PC-3 (cell line): ENCODE measurements at regions of chrX and their contacts with region 1.

Region 1: GRCh38 chrX:7159132-7159861 is 11.3 kb upstream of the PUDP start:
- DNase-seq: peak; percentile 86
- ATAC-seq: peak; percentile 99
- H3K4me3 ChIP-seq: peak overlapping the region; percentile 25; the same call in 1 of the 2 replicates
- H3K27ac ChIP-seq: peak overlapping the region; percentile 86
- H3K4me1 ChIP-seq: peaks cover 23% of the 10 kb centered on the region
- H3K27me3 ChIP-seq: no peaks in the 10 kb centered on the region
- CTCF ChIP-seq: no peak

Region 2: DNA sequence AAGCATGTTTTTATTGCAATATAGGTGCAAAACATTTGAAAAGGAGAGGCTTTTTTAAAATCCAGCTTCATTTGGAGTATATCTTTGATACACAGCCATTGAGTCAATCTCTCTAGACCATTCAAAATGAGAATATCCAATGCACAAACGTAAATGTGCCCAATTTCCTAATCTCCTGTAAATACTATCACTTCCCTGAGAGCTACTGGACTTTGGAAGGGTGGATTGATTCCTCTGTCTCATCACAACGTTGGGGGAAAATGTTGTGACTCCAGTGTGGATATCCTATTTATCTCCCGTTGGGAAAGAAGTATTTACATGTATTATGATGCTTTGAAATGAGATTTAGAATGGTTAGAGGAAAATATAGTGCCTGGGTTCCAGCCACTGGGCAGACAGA is 560.1 kb before region 1 on chrX:
- CTCF ChIA-PET with region 1: no interaction called
- POLR2A ChIA-PET with region 1: no interaction called
- intact Hi-C with region 1: no loop called
- DNase-seq: no peak
- ATAC-seq: no peak
- H3K4me3 ChIP-seq: no peak overlapping the region
- H3K27ac ChIP-seq: no peak overlapping the region
- H3K4me1 ChIP-seq: no peaks in the 10 kb centered on the region
- H3K27me3 ChIP-seq: no peaks in the 10 kb centered on the region
- CTCF ChIP-seq: no peak

Region 3: GRCh38 chrX:7147978-7148824 is 11.1 kb before region 1 on chrX and contains the start of gene PUDP:
- CTCF ChIA-PET with region 1: no interaction called
- POLR2A ChIA-PET with region 1: no interaction called
- intact Hi-C with region 1: loop called (anchors 2 kb)
- DNase-seq: peak; percentile 84
- ATAC-seq: peak; percentile 78
- H3K4me3 ChIP-seq: peak within 1 kb of the TSS; percentile 96
- H3K27ac ChIP-seq: peak within 1 kb of the TSS; percentile 68
- H3K4me1 ChIP-seq: peaks cover 30% of the 10 kb centered on the region
- H3K27me3 ChIP-seq: no peaks in the 10 kb centered on the region
- CTCF ChIP-seq: peak; percentile 26; the same call in 1 of the 2 replicates
- total RNA-seq, gene PUDP: 7.6 and 7.8 TPM in 2 replicates

Region 4: DNA sequence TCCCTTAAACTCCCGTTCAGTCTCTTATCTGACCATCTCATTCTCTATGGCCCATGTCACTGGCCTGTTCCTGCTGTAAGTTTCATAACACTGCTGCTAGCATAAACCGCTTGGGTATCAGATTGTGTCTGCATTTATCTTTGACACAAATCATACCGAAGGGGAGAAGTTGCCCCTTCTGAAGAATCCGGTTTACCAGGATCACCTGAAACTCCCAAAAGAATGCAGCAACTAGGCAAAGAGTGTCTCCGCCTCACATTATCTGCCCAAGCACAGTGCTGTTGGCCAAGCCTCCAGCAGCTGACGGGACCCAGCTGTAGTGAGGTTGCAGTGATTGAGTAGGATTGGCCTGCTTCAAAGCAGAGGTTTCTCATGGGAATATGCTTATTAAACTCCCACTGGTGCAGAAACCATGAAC is 59.9 kb after region 1 on chrX:
- CTCF ChIA-PET with region 1: no interaction called
- POLR2A ChIA-PET with region 1: no interaction called
- intact Hi-C with region 1: no loop called
- DNase-seq: no peak
- ATAC-seq: no peak
- H3K4me3 ChIP-seq: no peak overlapping the region
- H3K27ac ChIP-seq: no peak overlapping the region
- H3K4me1 ChIP-seq: peaks cover under 1% of the 10 kb centered on the region; the same call in 1 of the 2 replicates
- H3K27me3 ChIP-seq: no peaks in the 10 kb centered on the region
- CTCF ChIP-seq: no peak

Region 5: DNA sequence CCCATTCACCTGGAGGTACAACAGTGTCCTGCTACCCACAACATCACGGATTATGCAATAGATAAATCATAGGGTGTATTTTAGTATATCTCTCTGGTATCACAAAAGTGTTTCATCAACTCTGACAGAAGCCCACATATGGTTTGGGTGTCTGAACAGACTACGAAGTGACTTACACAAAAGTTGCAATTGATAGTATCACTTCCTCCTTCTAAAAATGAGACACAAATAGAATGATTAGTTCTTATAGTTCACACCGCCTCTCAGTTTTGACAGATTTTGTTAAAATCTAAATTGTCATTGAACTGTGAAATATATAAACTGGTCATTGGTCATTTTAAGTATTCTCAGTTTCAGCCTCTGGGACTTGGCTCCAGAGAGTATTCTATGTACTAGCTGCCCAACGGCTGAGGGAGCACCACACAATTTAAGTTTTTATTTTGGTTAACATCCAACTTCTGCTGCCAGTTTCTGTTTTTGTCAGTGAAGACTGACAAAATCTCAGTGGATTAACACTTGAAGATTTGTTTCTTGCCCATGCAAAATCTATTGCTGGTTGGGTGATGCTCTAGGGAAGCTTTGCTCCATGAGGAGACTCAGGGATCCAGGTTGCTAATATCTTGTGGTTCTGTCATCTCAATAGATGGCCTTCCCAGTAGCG is 102.5 kb after region 1 on chrX:
- CTCF ChIA-PET with region 1: no interaction called
- POLR2A ChIA-PET with region 1: no interaction called
- intact Hi-C with region 1: loop called (anchors 5 kb)
- DNase-seq: no peak
- ATAC-seq: no peak
- H3K4me3 ChIP-seq: no peak overlapping the region
- H3K27ac ChIP-seq: no peak overlapping the region
- H3K4me1 ChIP-seq: peaks cover 13% of the 10 kb centered on the region; the same call in 1 of the 2 replicates
- H3K27me3 ChIP-seq: no peaks in the 10 kb centered on the region
- CTCF ChIP-seq: no peak